ENCODE measurements at regions of chr6 and their contacts with region 1.

Region 1: GRCh38 chr6:149925974-149926777 is 3.3 kb upstream of the RAET1G start:
- DNase-seq: peak; percentile 92
- ATAC-seq: peak; percentile 90 to 91

Region 2: GRCh38 chr6:149834513-149835481 is 91.4 kb before region 1 on chr6:
- intact Hi-C with region 1: loop called (anchors 1 to 5 kb)
- DNase-seq: peak; percentile 29
- ATAC-seq: peak; percentile 59 to 62

Measured in left cardiac atrium (tissue), 4 donors.